Cardiac septum (tissue), 1 donor: ENCODE measurements at regions of chr5 and their contacts with region 1.

Region 1: GRCh38 chr5:155193029-155193428 is 179.5 kb downstream of the KIF4B start:
- DNase-seq: no peak

Region 2: GRCh38 chr5:154273028-154273617 is 919.9 kb before region 1 on chr5:
- intact Hi-C with region 1: no loop called
- DNase-seq: no peak

Region 3: GRCh38 chr5:154513669-154514084 is 679.4 kb before region 1 on chr5:
- intact Hi-C with region 1: no loop called
- DNase-seq: no peak

Region 4: GRCh38 chr5:154868702-154869101 is 324.3 kb before region 1 on chr5:
- intact Hi-C with region 1: no loop called
- DNase-seq: no peak

Region 5: DNA sequence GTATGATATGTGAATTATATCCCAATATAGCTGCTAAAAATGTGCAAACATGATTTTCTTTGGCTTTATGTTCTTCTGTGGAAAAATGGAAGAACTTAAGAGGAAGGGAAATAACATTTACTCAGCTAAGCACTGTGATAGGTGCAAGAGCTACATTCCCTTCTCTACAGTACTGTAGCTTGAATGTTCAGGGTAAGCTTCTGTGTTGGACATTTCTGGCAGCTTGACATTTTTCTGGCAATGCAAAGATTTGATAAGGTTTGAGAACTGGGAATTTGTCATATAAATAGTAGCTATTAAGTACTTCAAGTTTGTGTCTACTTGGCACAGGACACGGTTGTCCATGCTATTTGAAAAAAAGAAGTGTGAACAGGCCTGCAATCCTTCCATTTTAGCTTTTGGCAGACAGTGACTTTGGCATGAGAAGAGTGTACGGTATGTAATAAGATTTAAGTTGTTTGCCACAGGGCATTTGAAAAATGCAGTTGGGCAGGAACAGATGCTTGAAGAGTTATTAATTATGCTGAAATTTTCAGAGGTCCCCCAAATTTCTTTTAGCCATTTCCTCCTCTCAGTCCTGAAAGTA is 101.9 kb before region 1 on chr5:
- intact Hi-C with region 1: loop called (anchors 2 kb)
- DNase-seq: no peak

Region 6: GRCh38 chr5:155147222-155147621 is 45.8 kb before region 1 on chr5:
- intact Hi-C with region 1: loop called (anchors 2 kb)
- DNase-seq: no peak

Region 7: GRCh38 chr5:155485386-155485785 is 292.4 kb after region 1 on chr5:
- intact Hi-C with region 1: loop called (anchors 2 kb)
- DNase-seq: no peak